Mammary epithelial cell (primary cell): ENCODE measurements at regions of chr3 and their contacts with region 1.

Region 1: GRCh38 chr3:94336046-94336710 is 273.3 kb downstream of the NSUN3 start:
- DNase-seq: peak; percentile 40
- H3K4me3 ChIP-seq: no peak overlapping the region
- H3K27ac ChIP-seq: no peak overlapping the region
- H3K4me1 ChIP-seq: no peaks in the 10 kb centered on the region
- H3K27me3 ChIP-seq: no peaks in the 10 kb centered on the region
- CTCF ChIP-seq: peak; percentile 53 to 63

Region 2: GRCh38 chr3:94050546-94050945 is 285.6 kb before region 1 on chr3:
- CTCF ChIA-PET with region 1: no interaction called
- dilution Hi-C with region 1: no loop called
- in situ Hi-C with region 1: no loop called
- intact Hi-C with region 1: no loop called
- DNase-seq: no peak
- H3K4me3 ChIP-seq: no peak overlapping the region
- H3K27ac ChIP-seq: no peak overlapping the region
- H3K4me1 ChIP-seq: no peaks in the 10 kb centered on the region
- H3K27me3 ChIP-seq: no peaks in the 10 kb centered on the region
- CTCF ChIP-seq: no peak

Region 3: GRCh38 chr3:94513600-94513999 is 177.4 kb after region 1 on chr3:
- CTCF ChIA-PET with region 1: no interaction called
- dilution Hi-C with region 1: no loop called
- in situ Hi-C with region 1: no loop called
- intact Hi-C with region 1: loop called (anchors 5 kb)
- DNase-seq: no peak
- H3K4me3 ChIP-seq: no peak overlapping the region
- H3K27ac ChIP-seq: no peak overlapping the region
- H3K4me1 ChIP-seq: no peaks in the 10 kb centered on the region
- H3K27me3 ChIP-seq: peaks cover 3% of the 10 kb centered on the region
- CTCF ChIP-seq: no peak